Activated CD4-positive, alpha-beta memory T cell treated with anti-CD3 and anti-CD28 coated beads, Interleukin-2, amount 10 ng/mL, durations not matched to agents 7 days and 5 days (primary cell): ENCODE measurements at regions of chr6 and their contacts with region 1.

Region 1: DNA sequence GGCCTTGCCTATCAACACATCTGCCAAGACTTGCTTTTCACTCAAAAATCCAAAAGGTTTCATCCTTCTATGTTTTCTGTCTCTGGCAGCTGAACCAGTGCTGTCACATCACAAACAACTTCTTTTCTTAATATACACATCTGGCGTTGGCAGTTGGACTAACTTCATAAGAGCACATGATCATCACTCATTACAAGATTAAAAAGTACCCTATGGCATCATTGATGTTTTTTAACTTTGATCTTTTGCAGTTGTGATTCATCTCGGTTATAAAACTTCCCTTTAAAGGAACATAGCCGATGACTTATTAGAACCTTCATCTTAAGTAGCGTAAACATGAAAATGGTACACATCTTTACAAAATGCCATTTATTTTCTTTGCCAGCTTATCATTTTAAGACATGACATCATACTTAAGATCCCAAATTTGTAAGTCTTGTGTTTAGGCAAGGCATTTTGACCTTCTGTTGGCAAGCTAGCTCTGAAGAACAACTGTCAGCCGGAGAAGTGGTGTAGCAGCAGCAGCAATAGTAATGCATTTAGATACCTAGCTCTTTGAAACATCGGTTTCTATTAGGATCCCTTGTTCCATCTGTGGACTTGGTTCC is 64.2 kb upstream of the SUPT3H start:
- DNase-seq: no peak
- H3K4me3 Mint-ChIP-seq: no peak overlapping the region
- H3K27ac Mint-ChIP-seq: peak overlapping the region; percentile 50
- H3K4me1 Mint-ChIP-seq: peaks cover 95% of the 10 kb centered on the region
- H3K27me3 Mint-ChIP-seq: no peaks in the 10 kb centered on the region

Region 2: DNA sequence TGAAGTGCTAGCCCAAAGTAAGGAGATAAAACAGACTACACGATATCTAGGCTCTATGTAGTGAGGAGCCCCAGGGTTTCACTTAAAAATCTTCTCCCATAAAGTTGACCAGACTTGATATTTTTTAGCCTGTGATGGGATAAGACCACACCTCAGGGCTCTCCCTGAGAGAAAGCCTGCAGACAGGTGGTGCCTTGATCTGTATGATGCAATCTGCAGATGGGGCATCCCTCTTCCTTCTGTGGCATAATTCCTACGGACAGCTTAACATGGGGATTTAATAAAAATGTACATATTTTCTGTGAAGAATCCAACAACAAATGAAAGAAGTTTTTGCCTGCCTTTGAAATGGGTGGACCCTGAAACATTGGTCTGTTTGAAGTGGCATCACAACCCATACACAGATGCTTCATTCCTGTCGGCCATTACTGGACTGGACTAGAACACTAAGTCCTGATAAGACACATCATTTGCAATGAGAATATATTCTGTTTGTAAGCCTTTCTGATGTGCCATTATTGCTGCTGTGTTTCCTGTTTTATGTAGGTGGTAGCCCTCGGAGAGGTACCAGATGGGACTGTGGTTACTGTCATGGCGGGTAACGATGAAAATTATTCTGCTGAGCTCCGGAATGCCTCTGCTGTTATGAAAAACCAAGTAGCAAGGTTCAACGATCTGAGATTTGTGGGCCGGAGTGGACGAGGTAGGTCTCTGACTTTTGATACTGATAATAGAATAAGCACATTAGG is 10.5 kb before region 1 on chr6:
- CTCF ChIA-PET with region 1: interaction called, 3 read pairs
- POLR2A ChIA-PET with region 1: interaction called, 91 read pairs
- DNase-seq: no peak
- H3K4me3 Mint-ChIP-seq: peak overlapping the region; percentile 69
- H3K27ac Mint-ChIP-seq: peak overlapping the region; percentile 83
- H3K4me1 Mint-ChIP-seq: peaks cover 72% of the 10 kb centered on the region
- H3K27me3 Mint-ChIP-seq: no peaks in the 10 kb centered on the region

Region 3: DNA sequence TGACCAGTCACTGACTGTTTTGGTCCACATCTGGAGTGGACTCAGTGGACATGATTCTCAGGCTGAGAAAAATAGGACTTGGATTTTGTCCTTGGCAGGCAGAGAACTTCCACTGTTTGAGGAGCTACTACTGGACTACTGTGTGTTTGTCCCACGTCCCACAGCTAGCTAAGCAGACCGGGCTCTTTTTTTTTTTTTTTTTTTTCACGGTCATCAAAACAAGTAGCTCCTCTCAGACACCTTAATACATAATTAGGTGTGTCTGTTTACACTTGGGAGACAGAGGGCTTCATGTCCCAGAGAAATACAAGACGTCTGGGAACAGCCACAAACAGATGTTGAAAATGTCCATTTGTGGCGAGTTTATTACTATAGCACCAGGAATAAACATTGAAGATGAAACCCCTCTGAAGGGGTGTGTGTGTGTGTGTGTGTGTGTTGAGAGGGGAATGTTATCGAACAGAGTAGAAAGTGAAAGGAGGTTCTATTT is 90.8 kb after region 1 on chr6:
- CTCF ChIA-PET with region 1: no interaction called
- POLR2A ChIA-PET with region 1: no interaction called
- DNase-seq: no peak
- H3K4me3 Mint-ChIP-seq: no peak overlapping the region
- H3K27ac Mint-ChIP-seq: no peak overlapping the region
- H3K4me1 Mint-ChIP-seq: peaks cover 18% of the 10 kb centered on the region
- H3K27me3 Mint-ChIP-seq: no peaks in the 10 kb centered on the region